Motor neuron (in vitro differentiated cells): ENCODE measurements at regions of chr5 and their contacts with region 1.

Region 1: GRCh38 chr5:79464695-79465332 is 49.1 kb downstream of the HOMER1 start:
- ATAC-seq: peak in 3 of 8 experiments; percentile 50 to 72 (median 58)
- H3K4me3 ChIP-seq: no peak overlapping the region
- H3K27ac ChIP-seq: no peak overlapping the region
- H3K4me1 ChIP-seq: no peaks in the 10 kb centered on the region

Region 2: GRCh38 chr5:78771260-78772205 is 693.3 kb before region 1 on chr5:
- in situ Hi-C with region 1: no loop called
- ATAC-seq: peak in 3 of 8 experiments; percentile 45 to 99 (median 81)
- H3K4me3 ChIP-seq: no peak overlapping the region
- H3K27ac ChIP-seq: no peak overlapping the region
- H3K4me1 ChIP-seq: no peaks in the 10 kb centered on the region

Region 3: DNA sequence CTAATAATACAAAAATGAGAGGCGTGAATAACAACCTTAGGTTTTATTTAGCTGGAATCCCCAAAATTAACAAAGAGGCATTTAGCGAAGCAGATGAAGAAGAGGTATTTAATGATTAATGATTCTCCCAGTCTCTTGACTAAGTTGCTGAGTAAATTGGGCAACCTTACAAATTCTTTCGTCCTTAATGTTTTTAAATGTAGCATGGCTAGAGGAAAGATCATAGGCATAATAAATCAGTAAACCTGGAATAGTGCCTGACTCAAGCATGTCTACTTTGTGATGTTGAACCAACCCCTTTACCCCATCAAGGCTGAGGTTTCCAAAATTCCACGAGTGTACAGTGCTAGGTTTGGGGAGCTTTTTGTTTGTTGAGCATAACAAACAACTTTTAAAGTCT is 345.3 kb before region 1 on chr5:
- in situ Hi-C with region 1: no loop called
- ATAC-seq: no peak
- H3K4me3 ChIP-seq: no peak overlapping the region
- H3K27ac ChIP-seq: no peak overlapping the region
- H3K4me1 ChIP-seq: no peaks in the 10 kb centered on the region

Region 4: GRCh38 chr5:79173626-79174025 is 291.2 kb before region 1 on chr5:
- in situ Hi-C with region 1: loop called in 1 of 9 experiments (anchors 25 kb)
- ATAC-seq: peak in 2 of 8 experiments; percentile 53 to 56
- H3K4me3 ChIP-seq: no peak overlapping the region
- H3K27ac ChIP-seq: no peak overlapping the region
- H3K4me1 ChIP-seq: no peaks in the 10 kb centered on the region

Region 5: DNA sequence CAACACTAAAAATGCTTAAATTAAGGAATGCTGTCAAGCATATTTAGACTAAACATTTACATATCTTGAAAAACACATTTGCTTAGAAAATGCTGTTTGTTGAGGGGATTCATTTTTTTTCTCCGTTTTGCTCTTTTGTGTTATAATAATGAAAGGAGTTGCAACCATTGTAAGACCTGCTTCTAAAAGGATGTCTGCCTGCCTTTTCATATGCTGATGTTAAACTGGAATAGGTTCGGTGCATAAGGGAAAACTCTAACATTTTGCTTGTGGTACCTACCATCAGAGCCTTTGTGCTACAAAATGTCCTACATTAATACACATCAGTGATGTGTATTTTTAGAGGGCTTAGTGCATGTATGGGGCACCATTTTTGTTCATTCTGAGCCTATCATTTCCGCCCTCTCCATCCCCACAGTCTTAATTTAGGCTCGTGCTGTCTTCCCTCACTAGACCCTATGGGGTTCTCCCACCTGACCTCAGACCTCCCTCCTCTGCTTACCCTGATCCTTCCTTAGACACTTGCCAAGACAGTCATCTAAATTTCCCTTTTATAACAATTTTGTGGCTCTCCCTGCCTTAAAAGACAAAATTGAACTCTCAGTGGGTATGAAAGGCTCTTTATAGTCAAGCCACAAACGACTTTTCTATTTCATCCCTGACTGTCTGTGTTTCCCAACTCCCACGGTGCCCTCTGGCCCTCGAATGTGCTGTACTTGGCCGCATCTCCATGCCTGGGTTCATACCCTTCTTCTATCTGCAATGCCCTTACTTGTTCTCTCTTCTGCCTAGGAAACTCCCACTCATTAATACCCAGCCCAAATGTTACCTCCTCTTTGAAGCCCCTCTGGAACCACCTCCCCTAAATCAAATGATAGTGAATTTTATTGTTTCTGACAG is 286.0 kb after region 1 on chr5:
- in situ Hi-C with region 1: no loop called
- ATAC-seq: no peak
- H3K4me3 ChIP-seq: no peak overlapping the region
- H3K27ac ChIP-seq: no peak overlapping the region
- H3K4me1 ChIP-seq: peaks cover 11 to 13% of the 10 kb centered on the region in 2 donors

Region 6: GRCh38 chr5:80399526-80400239 is 934.9 kb after region 1 on chr5:
- in situ Hi-C with region 1: no loop called
- ATAC-seq: peak in 7 of 8 experiments; percentile 68 to 99 (median 89)
- H3K4me3 ChIP-seq: no peak overlapping the region
- H3K27ac ChIP-seq: no peak overlapping the region
- H3K4me1 ChIP-seq: peaks cover 8% of the 10 kb centered on the region in 2 donors